ENCODE measurements at regions of chr1 and their contacts with region 1.

Region 1: GRCh38 chr1:185636848-185637247 is 97.3 kb upstream of the HMCN1 start:
- DNase-seq: peak; percentile 61
- H3K4me3 Mint-ChIP-seq: peak overlapping the region; percentile 27
- H3K27ac Mint-ChIP-seq: peak overlapping the region; percentile 89
- H3K4me1 Mint-ChIP-seq: peaks cover 17% of the 10 kb centered on the region
- H3K27me3 Mint-ChIP-seq: no peaks in the 10 kb centered on the region

Region 2: GRCh38 chr1:184892116-184892515 is 744.7 kb before region 1 on chr1:
- intact Hi-C with region 1: loop called (anchors 2 kb)
- DNase-seq: no peak
- H3K4me3 Mint-ChIP-seq: no peak overlapping the region
- H3K27ac Mint-ChIP-seq: peak overlapping the region; percentile 61
- H3K4me1 Mint-ChIP-seq: peaks cover 39% of the 10 kb centered on the region
- H3K27me3 Mint-ChIP-seq: no peaks in the 10 kb centered on the region

Region 3: GRCh38 chr1:185420588-185421081 is 216.2 kb before region 1 on chr1:
- intact Hi-C with region 1: loop called (anchors 2 kb)
- DNase-seq: peak; percentile 49
- H3K4me3 Mint-ChIP-seq: peak overlapping the region; percentile 17
- H3K27ac Mint-ChIP-seq: peak overlapping the region; percentile 77
- H3K4me1 Mint-ChIP-seq: peaks cover 76% of the 10 kb centered on the region
- H3K27me3 Mint-ChIP-seq: no peaks in the 10 kb centered on the region

Region 4: GRCh38 chr1:185566995-185567394 is 69.9 kb before region 1 on chr1:
- intact Hi-C with region 1: loop called (anchors 1 kb)
- DNase-seq: peak; percentile 52
- H3K4me3 Mint-ChIP-seq: peak overlapping the region; percentile 44
- H3K27ac Mint-ChIP-seq: peak overlapping the region; percentile 82
- H3K4me1 Mint-ChIP-seq: peaks cover 58% of the 10 kb centered on the region
- H3K27me3 Mint-ChIP-seq: no peaks in the 10 kb centered on the region

Region 5: DNA sequence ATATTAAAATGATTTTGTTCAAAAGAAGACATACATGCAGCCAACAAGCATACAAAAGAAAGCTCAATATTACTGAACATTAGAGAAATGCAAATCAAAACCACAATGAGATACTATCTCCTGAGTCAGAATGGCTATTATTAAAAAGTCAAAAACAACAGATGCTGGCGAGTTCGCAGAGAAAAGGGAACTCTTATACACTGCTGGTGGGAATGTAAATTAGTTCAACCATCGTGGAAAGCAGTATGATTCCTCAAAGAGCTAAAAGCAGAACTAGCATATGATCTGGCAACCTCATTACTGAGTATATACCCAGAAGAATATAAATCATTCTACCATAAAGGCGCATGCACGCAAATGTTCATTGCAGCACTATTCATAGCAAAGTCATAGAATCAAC is 28.7 kb before region 1 on chr1:
- intact Hi-C with region 1: loop called (anchors 2 kb)
- DNase-seq: no peak
- H3K4me3 Mint-ChIP-seq: no peak overlapping the region
- H3K27ac Mint-ChIP-seq: no peak overlapping the region
- H3K4me1 Mint-ChIP-seq: no peaks in the 10 kb centered on the region
- H3K27me3 Mint-ChIP-seq: peaks cover 3% of the 10 kb centered on the region

Region 6: DNA sequence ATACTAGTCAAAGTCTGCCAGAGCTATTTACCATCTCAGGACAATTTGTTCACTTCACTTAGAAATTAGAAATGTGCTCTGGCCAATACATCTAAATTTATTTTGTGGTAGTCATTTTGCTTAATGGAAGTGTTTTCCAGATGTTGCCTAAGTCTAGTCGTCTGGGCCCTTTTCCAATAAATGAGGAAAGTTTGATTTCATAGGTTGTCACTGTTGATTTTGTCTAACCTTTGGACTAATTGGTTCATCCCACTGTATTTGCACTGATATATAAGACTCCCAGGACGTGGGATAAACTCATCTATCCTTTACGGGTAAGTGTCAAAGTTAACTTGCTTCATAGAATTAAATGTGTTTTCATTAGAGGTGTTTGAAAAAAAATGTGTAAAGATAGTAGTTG is 659.1 kb after region 1 on chr1:
- intact Hi-C with region 1: loop called (anchors 10 kb)
- DNase-seq: no peak
- H3K4me3 Mint-ChIP-seq: peak within 1 kb of the TSS; percentile 50
- H3K27ac Mint-ChIP-seq: peak within 1 kb of the TSS; percentile 61
- H3K4me1 Mint-ChIP-seq: peaks cover 78% of the 10 kb centered on the region
- H3K27me3 Mint-ChIP-seq: no peaks in the 10 kb centered on the region